Adrenal gland (tissue), 19 donors: ENCODE measurements at regions of chr20 and their contacts with region 1.

Region 1: DNA sequence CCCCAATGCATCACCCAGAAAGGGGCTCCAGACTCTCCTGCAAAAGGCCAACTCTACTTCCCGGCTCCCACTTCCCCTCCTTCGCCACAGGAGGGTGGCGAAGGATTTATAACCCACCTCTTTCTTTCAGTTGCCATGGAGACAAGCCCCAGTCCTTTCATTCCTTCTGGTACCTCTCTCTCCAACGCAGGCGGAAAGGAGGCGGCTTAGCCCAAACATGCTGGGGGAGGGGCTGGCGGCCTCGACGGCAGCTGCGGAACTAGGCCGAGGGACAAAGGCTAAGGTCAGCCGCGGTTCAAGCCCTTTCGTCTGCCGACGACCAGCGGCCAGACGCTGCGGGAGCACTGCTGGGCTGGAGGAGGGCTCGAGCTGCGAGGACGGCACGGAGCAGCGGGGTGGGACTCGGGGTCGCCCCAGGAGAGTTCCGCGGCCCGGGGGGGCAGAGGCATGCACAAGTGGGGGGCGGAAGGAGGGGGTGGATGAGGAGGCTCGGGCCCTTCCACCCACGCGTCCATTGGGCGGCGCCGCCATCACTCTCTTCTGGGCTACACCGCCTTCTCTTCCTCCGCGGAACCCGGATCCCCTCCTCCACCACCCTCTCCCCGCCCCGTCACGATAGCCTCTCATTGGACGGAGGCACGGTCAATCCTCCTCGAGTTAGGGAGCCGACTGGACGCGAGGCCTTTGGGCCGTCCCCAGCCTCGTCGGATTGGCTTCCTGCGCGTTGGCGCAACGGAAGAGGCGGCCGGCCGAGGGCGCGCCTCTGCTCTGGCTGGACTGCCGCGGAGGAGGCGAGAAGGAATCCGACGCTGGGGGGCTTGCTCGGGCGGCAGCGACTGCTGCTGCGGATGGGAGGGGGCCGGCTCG is at the start of gene PANK2:
- DNase-seq: peak; percentile 99 to 100 (median 100)
- H3K4me3 ChIP-seq: peak within 1 kb of the TSS; percentile 69 to 100 (median 92)
- H3K27ac ChIP-seq: peak within 1 kb of the TSS; percentile 75 to 97 (median 90)
- H3K4me1 ChIP-seq: peaks cover 27 to 46% of the 10 kb centered on the region in 2 donors
- H3K27me3 ChIP-seq: no peaks in the 10 kb centered on the region
- CTCF ChIP-seq: peak in 5 of 6 experiments; percentile 46 to 74 (median 66)
- POLR2A ChIP-seq: peak; percentile 87 to 91
- total RNA-seq, gene PANK2: 32.5 to 70.1 (median 47.4) TPM

Region 2: DNA sequence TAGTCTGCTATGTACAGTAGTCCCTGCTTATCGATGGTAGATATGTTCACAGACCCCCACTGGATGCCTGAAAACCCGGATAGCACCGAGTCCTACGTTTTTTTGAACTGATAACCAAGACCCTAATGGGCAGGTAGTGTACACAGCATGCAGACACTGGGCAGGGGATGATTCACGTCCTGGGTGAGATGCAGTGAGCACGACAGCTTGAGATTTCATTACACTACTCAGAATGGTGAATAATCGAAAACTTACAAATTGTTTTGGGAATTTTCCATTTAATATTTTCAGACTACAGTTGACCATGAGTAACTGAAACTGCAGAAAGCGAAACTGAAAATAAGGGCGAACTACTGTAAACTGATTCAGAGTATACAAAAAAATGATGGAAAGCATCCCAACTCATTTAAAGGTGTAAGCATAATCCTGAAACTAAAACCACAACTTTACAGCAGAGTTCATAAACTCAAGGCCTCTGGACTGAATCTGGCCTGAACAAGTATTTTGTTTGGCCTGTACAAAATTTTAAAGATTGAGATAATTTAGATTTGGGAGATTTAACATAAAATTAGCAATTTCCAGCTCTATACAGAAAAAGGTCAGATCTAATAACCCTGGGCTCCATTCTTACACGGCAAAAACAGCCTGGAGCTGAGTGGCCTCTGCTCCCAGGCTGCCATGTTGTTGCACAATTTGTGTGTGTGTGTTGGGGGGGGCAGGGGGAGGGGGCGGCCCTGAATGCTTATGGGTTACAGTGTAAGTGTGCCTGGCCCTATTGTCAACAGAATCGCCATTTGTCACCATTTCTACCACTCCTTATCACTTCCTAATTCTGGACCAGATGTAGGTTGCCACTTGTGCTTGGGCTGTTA is 91.6 kb after region 1 on chr20:
- intact Hi-C with region 1: no loop called
- DNase-seq: peak; percentile 35 to 73 (median 66)
- H3K4me3 ChIP-seq: peak overlapping the region in 2 of 4 donors; percentile 31 to 40
- H3K27ac ChIP-seq: peak overlapping the region; percentile 15 to 90 (median 78)
- H3K4me1 ChIP-seq: peaks cover 8 to 14% of the 10 kb centered on the region in 2 donors
- H3K27me3 ChIP-seq: no peaks in the 10 kb centered on the region
- CTCF ChIP-seq: no peak
- POLR2A ChIP-seq: no peak

Region 3: GRCh38 chr20:4006640-4007039 is 117.8 kb after region 1 on chr20:
- intact Hi-C with region 1: loop called in 1 of 2 experiments (anchors 5 kb)
- DNase-seq: peak; percentile 57 to 91 (median 84)
- H3K4me3 ChIP-seq: no peak overlapping the region
- H3K27ac ChIP-seq: peak overlapping the region in 2 of 5 donors; percentile 27 to 60
- H3K4me1 ChIP-seq: peaks cover 17 to 21% of the 10 kb centered on the region in 2 donors
- H3K27me3 ChIP-seq: no peaks in the 10 kb centered on the region
- CTCF ChIP-seq: no peak
- POLR2A ChIP-seq: peak in 1 of 2 donors; percentile 24

Region 4: GRCh38 chr20:4026093-4026601 is 137.3 kb after region 1 on chr20:
- intact Hi-C with region 1: loop called in 1 of 2 experiments (anchors 10 kb)
- DNase-seq: peak in 1 of 7 donors; percentile 36
- H3K4me3 ChIP-seq: no peak overlapping the region
- H3K27ac ChIP-seq: no peak overlapping the region
- H3K4me1 ChIP-seq: no peaks in the 10 kb centered on the region
- H3K27me3 ChIP-seq: no peaks in the 10 kb centered on the region
- CTCF ChIP-seq: peak in 2 of 6 experiments; percentile 25 to 33
- POLR2A ChIP-seq: no peak

Region 5: DNA sequence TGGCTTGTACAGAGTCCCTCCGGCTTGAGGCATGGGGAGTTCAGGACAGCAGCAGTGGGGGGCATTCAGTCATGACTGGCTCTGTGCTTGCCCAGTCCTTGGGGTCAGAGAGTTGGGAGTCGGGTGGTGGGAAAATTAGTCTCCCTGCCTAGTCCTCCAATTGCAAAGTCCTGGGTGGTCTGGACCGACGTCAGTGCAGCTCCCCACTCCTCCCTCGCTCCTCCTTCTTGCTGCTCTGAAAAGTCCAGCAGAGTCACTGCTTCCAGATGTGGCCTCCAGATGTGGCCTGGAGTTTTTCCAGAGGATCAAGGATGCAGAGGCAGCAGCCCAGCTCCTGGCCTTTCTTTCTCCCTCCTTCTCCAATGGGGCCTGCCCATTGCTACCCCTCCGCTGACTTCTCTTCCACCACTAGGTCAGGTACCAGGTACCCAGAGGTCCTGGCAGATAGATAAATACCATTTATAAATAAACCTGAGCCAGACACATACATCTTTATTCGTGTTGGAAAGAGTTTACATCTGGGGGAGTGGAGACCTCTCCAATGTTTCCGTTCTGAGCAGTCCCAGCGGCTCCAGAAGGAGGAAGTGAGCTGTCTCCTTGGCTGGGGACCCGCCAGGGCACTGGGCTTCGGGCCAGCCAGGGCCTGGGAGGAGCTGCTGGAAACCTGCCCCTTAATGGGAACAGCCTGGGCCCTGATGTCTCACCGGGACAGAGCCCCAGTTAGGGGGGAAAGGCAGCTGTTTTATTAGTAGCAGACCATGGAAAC is 175.5 kb after region 1 on chr20:
- intact Hi-C with region 1: loop called in 1 of 2 experiments (anchors 10 kb)
- DNase-seq: peak; percentile 89 to 94 (median 92)
- H3K4me3 ChIP-seq: no peak overlapping the region
- H3K27ac ChIP-seq: peak overlapping the region in 2 of 5 donors; percentile 69 to 80
- H3K4me1 ChIP-seq: peaks cover 12 to 26% of the 10 kb centered on the region in 2 donors
- H3K27me3 ChIP-seq: no peaks in the 10 kb centered on the region
- CTCF ChIP-seq: no peak
- POLR2A ChIP-seq: no peak

Region 6: DNA sequence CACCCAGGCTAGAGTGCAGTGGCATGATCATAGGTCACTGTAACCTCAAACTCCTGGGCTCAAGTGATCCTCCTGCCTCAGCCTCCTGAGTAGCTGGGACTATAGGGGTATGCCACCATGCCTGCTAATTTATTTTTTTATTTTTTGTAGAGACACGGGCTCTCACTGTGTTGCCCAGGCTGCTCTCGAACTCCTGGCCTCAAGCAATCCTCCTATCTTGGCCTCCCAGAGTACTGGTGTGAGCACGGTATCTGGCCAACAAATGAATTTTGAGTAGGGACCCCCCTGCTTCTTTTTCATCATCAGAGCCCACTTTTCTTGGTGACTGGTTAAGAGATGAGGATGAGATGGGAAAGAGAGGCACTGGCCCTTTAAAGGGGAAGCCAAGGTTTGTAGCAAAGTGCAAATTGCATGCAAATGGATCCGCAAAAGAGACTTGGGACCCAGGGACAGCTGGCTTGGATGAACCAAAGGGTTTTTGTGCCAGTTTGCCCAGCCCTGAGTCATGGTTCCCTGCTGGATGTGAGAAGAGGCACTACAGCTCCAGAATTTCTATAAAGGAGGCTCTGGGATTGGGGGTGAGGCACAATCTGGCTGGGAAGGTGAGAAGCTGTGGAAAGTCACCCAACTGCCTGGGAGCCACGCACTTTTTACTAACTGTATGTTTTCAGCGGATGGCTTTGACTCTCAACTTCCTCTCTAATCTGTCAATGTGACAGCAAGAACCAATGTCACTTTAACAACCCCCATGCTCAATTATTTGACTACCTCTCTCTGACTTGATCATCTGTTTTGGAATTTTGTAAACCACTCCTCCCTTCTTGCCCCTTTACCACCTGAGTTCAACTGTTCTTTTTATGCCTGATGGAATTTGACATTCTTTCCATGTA is 185.2 kb after region 1 on chr20:
- intact Hi-C with region 1: loop called (anchors 5 to 10 kb)
- DNase-seq: peak in 2 of 7 donors; percentile 12 to 46
- H3K4me3 ChIP-seq: no peak overlapping the region
- H3K27ac ChIP-seq: no peak overlapping the region
- H3K4me1 ChIP-seq: peaks cover 0 to 8% of the 10 kb centered on the region in 2 donors
- H3K27me3 ChIP-seq: no peaks in the 10 kb centered on the region
- CTCF ChIP-seq: no peak
- POLR2A ChIP-seq: no peak

Region 7: GRCh38 chr20:4091490-4092479 is 202.9 kb after region 1 on chr20:
- intact Hi-C with region 1: loop called (anchors 5 kb)
- DNase-seq: peak; percentile 60 to 83 (median 69)
- H3K4me3 ChIP-seq: no peak overlapping the region
- H3K27ac ChIP-seq: peak overlapping the region in 2 of 5 donors; percentile 7 to 73
- H3K4me1 ChIP-seq: no peaks in the 10 kb centered on the region
- H3K27me3 ChIP-seq: no peaks in the 10 kb centered on the region
- CTCF ChIP-seq: peak; percentile 50 to 73 (median 64)
- POLR2A ChIP-seq: no peak